GM10248 (cell line): ENCODE measurements at regions of chr4 and their contacts with region 1.

Region 1: GRCh38 chr4:8345946-8346814 is 76.6 kb downstream of the HTRA3 start:
- DNase-seq: no peak
- CTCF ChIP-seq: no peak

Region 2: DNA sequence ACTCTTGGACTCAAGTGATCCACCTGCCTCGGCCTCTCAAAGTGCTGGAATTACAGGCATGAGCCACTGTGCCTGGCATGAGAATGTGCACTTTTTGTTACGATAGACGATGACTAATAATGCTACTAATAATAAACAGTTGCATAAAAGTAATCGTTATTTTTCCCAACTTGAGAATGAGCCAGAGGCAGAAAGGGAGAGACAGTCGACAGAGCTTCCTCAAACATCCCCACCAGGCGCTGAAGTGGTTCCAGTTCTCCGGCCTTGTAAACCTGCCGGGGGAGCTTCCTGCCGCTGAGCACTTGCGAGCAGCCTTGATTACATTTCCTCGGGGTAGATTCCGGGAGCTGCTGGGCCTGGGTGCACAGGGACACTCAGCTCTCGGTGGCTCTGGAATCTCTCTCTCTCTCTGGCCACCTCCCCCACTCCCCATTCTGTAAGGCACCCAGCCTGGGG is 85.5 kb before region 1 on chr4:
- CTCF ChIA-PET with region 1: no interaction called
- POLR2A ChIA-PET with region 1: no interaction called
- DNase-seq: no peak
- CTCF ChIP-seq: no peak

Region 3: DNA sequence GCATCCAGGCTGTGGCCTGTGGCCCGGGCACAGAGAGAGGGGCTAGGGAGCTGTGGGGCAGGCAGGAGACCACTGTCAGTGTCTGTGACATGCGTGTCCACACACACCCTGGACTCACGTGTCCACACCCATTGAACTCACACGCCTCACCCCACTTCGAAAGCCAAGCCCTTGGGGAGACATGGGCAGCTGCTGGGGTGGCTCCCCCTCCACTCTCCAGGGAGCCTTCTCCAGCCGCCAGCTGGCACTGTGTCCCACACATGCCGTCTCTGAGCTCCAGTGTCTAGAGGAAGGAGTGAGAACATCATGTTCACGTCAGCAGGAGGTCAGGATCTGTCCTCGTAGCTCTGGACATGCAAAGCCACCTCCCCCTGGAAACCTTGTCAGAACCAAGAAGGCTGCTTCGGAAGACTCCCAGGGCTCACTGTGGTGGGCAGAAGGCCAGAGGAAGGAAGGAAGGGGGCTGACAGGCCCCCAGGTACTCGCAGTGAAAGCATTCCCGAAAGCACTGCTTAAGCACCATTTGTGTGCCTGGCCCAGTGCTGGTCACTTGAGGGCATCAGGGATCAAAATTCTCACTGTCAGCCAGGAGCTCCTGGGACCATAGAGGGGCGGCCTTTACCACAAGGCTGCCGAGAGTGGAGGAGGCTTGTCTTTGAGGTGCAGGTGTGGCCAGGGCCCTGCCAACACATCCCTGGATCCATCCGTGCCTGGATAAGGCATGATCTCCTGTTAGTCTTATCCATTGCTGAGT is 15.2 kb before region 1 on chr4:
- CTCF ChIA-PET with region 1: interaction called, 4 read pairs
- POLR2A ChIA-PET with region 1: interaction called, 11 read pairs
- DNase-seq: no peak
- CTCF ChIP-seq: no peak